Endothelial cell of umbilical vein (primary cell): ENCODE measurements at regions of chr9 and their contacts with region 1.

Region 1: GRCh38 chr9:77424993-77425392 is 223.1 kb downstream of the GNA14 start:
- DNase-seq: peak; percentile 43
- H3K4me3 ChIP-seq: no peak overlapping the region
- H3K27ac ChIP-seq: peak overlapping the region; percentile 30
- H3K4me1 ChIP-seq: peaks cover 39% of the 10 kb centered on the region
- H3K27me3 ChIP-seq: no peaks in the 10 kb centered on the region
- CTCF ChIP-seq: no peak
- POLR2A ChIP-seq: no peak

Region 2: DNA sequence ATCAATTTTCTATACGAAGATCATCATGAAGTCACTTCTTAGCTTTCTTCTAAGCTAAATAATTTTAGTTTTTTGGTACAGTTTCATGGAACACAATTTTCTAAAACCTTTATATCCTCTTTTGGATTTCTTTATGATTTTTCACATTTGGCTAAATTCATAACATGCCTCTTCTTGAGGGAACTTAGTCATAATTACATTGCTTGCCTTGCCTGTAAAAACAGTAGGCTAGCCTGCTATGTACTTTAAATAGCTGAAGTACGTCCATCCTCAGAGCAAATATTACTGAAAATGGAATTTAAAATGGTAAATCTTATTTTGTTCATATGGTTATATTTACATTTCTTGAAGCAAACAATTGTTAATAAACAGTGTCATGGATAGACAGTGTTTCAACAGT is 22.7 kb before region 1 on chr9:
- CTCF ChIA-PET with region 1: no interaction called
- POLR2A ChIA-PET with region 1: no interaction called
- dilution Hi-C with region 1: no loop called
- intact Hi-C with region 1: no loop called
- DNase-seq: no peak
- H3K4me3 ChIP-seq: no peak overlapping the region
- H3K27ac ChIP-seq: no peak overlapping the region
- H3K4me1 ChIP-seq: peaks cover 7% of the 10 kb centered on the region
- H3K27me3 ChIP-seq: no peaks in the 10 kb centered on the region
- CTCF ChIP-seq: no peak
- POLR2A ChIP-seq: no peak

Region 3: DNA sequence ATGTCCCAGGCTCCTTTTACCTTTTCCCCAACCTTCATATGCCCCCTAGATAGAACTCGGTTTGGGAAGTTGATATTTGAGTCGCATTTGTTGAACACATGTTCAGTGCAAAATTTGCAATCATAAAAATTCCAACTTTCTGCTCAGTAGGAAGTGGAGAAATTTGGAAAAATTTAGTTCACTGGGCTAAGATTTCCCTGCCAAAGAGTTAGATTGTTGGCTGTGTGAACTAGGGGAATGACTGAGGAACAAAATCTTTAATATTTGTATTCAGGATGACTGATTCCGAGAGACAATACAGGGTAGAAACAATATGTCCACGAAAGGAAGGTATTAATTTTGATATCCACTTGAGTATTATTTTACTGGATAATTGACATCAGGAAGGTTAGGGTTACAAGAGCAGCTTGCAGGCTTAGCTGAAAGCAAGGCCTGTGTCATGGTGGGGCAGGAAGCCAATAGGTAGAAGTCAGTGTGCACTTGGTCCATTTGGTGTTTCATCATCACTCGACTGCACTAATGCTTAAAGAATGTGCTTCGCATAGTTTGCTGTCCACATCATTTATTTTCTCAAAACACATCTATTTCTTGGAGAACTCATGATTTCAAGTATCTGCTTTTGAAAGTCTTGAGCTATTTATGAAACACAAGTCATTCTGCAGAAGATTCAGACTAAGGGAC is 282.5 kb after region 1 on chr9:
- CTCF ChIA-PET with region 1: no interaction called
- POLR2A ChIA-PET with region 1: no interaction called
- dilution Hi-C with region 1: no loop called
- intact Hi-C with region 1: loop called (anchors 5 kb)
- DNase-seq: peak; percentile 96
- H3K4me3 ChIP-seq: peak overlapping the region in 1 of 3 experiments; percentile 46
- H3K27ac ChIP-seq: peak overlapping the region; percentile 82
- H3K4me1 ChIP-seq: peaks cover 53% of the 10 kb centered on the region
- H3K27me3 ChIP-seq: no peaks in the 10 kb centered on the region
- CTCF ChIP-seq: no peak
- POLR2A ChIP-seq: peak; percentile 24